ENCODE measurements at regions of chr12 and their contacts with region 1.

Region 1: GRCh38 chr12:125402874-125403789 is 337.9 kb downstream of the AACS start:
- DNase-seq: peak; percentile 24
- H3K4me3 ChIP-seq: no peak overlapping the region
- H3K27ac ChIP-seq: no peak overlapping the region
- H3K4me1 ChIP-seq: no peaks in the 10 kb centered on the region
- H3K27me3 ChIP-seq: no peaks in the 10 kb centered on the region
- CTCF ChIP-seq: peak; percentile 19 to 41
- POLR2A ChIP-seq: no peak

Region 2: GRCh38 chr12:125330645-125331341 is 72.3 kb before region 1 on chr12:
- CTCF ChIA-PET with region 1: interaction called, 7 read pairs
- POLR2A ChIA-PET with region 1: no interaction called
- dilution Hi-C with region 1: no loop called
- intact Hi-C with region 1: loop called (anchors 1 kb)
- DNase-seq: peak; percentile 16
- H3K4me3 ChIP-seq: no peak overlapping the region
- H3K27ac ChIP-seq: no peak overlapping the region
- H3K4me1 ChIP-seq: no peaks in the 10 kb centered on the region
- H3K27me3 ChIP-seq: no peaks in the 10 kb centered on the region
- CTCF ChIP-seq: peak; percentile 69 to 86
- POLR2A ChIP-seq: no peak

Measured in endothelial cell of umbilical vein (primary cell).